Psoas muscle (tissue), 8 donors: ENCODE measurements at regions of chr9 and their contacts with region 1.

Region 1: GRCh38 chr9:72476617-72477375 is 44.6 kb upstream of the TMC1 start:
- DNase-seq: no peak
- ATAC-seq: peak; percentile 56 to 91 (median 76)
- H3K4me3 ChIP-seq: no peak overlapping the region
- H3K27ac ChIP-seq: no peak overlapping the region
- H3K4me1 ChIP-seq: peaks cover 10% of the 10 kb centered on the region
- H3K27me3 ChIP-seq: no peaks in the 10 kb centered on the region
- CTCF ChIP-seq: no peak

Region 2: DNA sequence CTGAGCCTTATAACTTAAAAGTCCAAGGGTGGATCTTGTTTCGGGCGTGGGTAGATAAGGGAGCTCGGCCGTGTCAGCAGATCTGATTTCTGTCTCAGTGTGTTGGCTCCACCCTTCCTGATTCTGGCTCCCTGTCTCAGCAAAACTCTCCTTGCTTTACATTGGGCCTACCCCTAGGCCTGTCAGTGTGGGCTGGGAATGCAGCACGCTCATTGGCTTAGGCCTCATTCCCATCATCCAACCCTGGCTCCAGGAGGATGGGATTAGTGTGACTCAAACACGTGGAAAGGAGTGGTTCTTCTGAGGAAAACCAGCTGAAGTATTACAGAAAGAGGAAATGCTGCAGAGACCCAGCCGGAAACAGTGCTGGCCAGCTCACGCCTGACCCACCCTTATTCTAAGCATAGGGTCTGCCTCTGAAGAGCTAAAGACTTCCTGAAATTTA is 171.7 kb before region 1 on chr9:
- intact Hi-C with region 1: loop called in 1 of 2 experiments (anchors 5 kb)
- DNase-seq: peak; percentile 56 to 82
- ATAC-seq: peak; percentile 84 to 96 (median 93)
- H3K4me3 ChIP-seq: peak overlapping the region; percentile 61
- H3K27ac ChIP-seq: peak overlapping the region; percentile 78
- H3K4me1 ChIP-seq: peaks cover 24% of the 10 kb centered on the region
- H3K27me3 ChIP-seq: no peaks in the 10 kb centered on the region
- CTCF ChIP-seq: no peak

Region 3: DNA sequence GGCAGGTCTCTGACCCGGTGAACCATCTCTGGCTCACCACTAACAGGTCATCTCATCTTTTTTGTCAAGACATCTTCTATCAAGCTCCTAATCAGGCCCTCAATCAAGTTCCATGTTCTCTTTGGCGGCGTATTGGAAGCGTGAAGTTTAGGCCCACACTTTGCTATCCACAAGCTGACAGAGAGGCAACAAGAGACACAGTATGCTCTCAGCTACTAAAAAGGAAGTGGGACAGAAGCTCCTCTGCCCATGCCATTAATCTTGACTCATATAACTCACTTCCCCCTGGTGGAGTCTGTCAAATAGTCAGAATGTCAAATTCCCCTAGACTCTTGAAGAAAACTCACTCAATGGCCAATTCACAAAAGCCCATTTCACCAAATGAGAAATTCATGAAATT is 32.9 kb before region 1 on chr9:
- intact Hi-C with region 1: no loop called
- DNase-seq: no peak
- ATAC-seq: no peak
- H3K4me3 ChIP-seq: no peak overlapping the region
- H3K27ac ChIP-seq: no peak overlapping the region
- H3K4me1 ChIP-seq: no peaks in the 10 kb centered on the region
- H3K27me3 ChIP-seq: no peaks in the 10 kb centered on the region
- CTCF ChIP-seq: no peak

Region 4: DNA sequence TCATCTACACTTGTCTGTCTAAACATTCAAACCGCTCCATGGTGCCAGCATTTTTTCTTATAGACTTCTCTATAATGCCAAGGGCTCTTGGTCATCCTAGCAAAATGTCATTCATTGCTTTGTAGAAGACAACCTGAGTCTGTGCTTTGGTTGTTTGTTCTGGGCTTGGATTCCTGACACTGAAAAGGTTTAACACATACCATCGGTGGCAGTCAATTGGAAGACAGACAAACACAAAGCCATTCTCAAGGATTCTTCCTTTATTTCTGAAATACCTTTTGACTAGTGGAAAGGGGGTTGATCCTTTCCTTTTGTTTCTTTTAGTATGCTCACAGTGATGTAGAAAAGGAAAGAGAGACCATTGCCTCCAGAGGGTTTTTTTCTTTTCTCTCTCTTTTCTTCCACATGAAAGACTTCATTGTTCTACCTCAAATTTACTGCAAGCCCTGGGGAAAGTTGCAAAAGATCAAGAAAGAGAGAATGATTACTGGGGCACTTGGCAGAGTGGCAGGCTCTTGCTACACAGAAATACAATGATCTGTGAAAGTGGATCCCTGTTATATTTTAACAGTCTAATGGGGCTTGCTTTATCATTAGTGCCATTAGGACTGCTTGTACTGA is 21.8 kb before region 1 on chr9:
- intact Hi-C with region 1: no loop called
- DNase-seq: no peak
- ATAC-seq: no peak
- H3K4me3 ChIP-seq: no peak overlapping the region
- H3K27ac ChIP-seq: no peak overlapping the region
- H3K4me1 ChIP-seq: no peaks in the 10 kb centered on the region
- H3K27me3 ChIP-seq: no peaks in the 10 kb centered on the region
- CTCF ChIP-seq: no peak

Region 5: GRCh38 chr9:72592502-72593403 is 116.0 kb after region 1 on chr9:
- intact Hi-C with region 1: loop called in 1 of 2 experiments (anchors 5 kb)
- DNase-seq: no peak
- ATAC-seq: peak; percentile 82 to 96 (median 88)
- H3K4me3 ChIP-seq: no peak overlapping the region
- H3K27ac ChIP-seq: no peak overlapping the region
- H3K4me1 ChIP-seq: peaks cover 5% of the 10 kb centered on the region
- H3K27me3 ChIP-seq: no peaks in the 10 kb centered on the region
- CTCF ChIP-seq: peak; percentile 92